ENCODE measurements at regions of chr9 and their contacts with region 1.

Region 1: DNA sequence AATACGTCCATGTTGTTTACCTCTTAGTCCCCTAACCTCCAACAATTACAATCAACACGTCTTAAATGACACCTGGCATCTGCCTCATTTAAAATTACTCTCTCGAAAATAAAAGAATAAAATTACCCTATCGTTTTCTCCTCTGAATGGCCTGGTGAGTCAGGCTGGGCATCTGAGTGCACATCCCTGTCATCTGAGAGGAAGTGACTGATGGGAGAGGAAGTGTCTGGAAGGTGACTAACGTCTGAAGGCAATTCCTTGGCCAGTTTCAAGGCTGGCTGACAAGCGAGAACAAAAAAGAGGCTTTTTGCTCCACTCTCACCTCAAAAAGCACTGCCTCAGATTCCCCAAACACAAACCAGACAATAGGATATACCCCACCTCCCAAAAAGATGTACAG is 57.7 kb downstream of the MAPKAP1 start:
- DNase-seq: no peak
- CTCF ChIP-seq: no peak

Region 2: GRCh38 chr9:125593585-125594229 is 55.6 kb before region 1 on chr9:
- in situ Hi-C with region 1: no loop called
- DNase-seq: no peak
- CTCF ChIP-seq: no peak

Region 3: GRCh38 chr9:125758986-125759763 is 109.9 kb after region 1 on chr9:
- in situ Hi-C with region 1: loop called (anchors 10 kb)
- DNase-seq: no peak
- CTCF ChIP-seq: no peak